ENCODE measurements at regions of chr10 and their contacts with region 1.

Region 1: GRCh38 chr10:73937333-73938014 is 26.5 kb downstream of the PLAU start:
- DNase-seq: no peak
- CTCF ChIP-seq: no peak

Region 2: GRCh38 chr10:73894245-73894971 is 43.1 kb before region 1 on chr10:
- in situ Hi-C with region 1: loop called (anchors 5 kb)
- DNase-seq: no peak
- CTCF ChIP-seq: no peak

Measured in GM13976 (cell line).